Heart right ventricle (tissue), 16 donors: ENCODE measurements at regions of chrX and their contacts with region 1.

Region 1: GRCh38 chrX:109774706-109775105 is 41.6 kb upstream of the ACSL4 start:
- DNase-seq: no peak
- ATAC-seq: peak in 2 of 8 donors; percentile 29 to 94
- H3K4me3 ChIP-seq: no peak overlapping the region
- H3K27ac ChIP-seq: peak overlapping the region in 1 of 10 donors; percentile 1
- H3K4me1 ChIP-seq: no peaks in the 10 kb centered on the region
- H3K27me3 ChIP-seq: no peaks in the 10 kb centered on the region
- CTCF ChIP-seq: no peak

Region 2: DNA sequence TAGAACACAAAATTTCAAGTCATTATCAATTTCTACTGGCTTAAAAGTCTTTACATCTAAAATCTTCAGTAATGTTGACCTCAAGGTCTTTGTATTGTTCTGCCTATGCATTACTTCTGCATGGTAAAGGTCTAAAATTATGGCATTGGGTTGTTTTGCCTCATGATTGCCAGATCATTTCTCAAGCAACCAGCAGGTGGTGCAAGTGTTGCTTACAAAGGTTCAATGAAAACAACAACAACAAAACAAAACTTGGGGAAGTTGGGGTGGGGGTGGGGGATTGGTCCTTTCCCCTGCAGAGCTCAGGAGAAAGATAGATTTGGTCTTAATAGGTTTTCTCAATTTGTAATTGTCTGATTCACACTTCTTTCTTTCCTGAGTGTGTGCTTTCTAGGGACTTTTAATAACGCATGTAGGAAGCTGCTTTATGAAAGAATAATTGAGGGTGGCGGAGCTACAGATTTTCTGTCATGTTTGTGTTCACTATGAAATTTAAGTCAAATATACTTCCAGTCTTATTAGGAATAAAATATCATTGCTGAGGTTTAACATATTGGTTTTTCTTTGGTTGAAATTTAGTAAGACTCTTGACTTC is 1190.0 kb before region 1 on chrX:
- intact Hi-C with region 1: loop called in 1 of 10 experiments (anchors 5 kb)
- DNase-seq: no peak
- ATAC-seq: no peak
- H3K4me3 ChIP-seq: no peak overlapping the region
- H3K27ac ChIP-seq: no peak overlapping the region
- H3K4me1 ChIP-seq: no peaks in the 10 kb centered on the region
- H3K27me3 ChIP-seq: peaks cover 0 to 39% (median 0%) of the 10 kb centered on the region in 7 donors
- CTCF ChIP-seq: peak in 1 of 9 donors; percentile 25

Region 3: DNA sequence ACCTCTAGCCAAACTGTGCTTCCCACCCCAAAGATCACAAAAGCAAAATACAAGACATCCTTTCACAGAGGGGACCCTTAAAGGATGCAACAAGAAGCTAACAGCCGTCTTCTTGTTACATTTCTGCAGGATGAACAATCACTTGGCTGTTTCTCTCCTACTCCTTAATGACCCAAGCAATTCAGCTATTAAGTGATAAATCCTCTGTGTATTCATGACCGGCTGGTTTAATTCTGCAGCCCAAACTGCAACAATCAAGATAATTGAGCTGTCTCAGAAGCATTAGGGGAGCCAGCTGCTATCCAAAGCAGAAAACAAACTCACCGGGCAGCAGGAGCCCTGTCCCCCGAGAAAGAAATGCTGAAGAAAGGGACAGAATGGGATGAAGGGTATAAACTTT is 44.3 kb after region 1 on chrX:
- intact Hi-C with region 1: no loop called
- DNase-seq: no peak
- ATAC-seq: peak in 1 of 8 donors; percentile 49
- H3K4me3 ChIP-seq: no peak overlapping the region
- H3K27ac ChIP-seq: no peak overlapping the region
- H3K4me1 ChIP-seq: no peaks in the 10 kb centered on the region
- H3K27me3 ChIP-seq: peaks cover 0 to 54% (median 0%) of the 10 kb centered on the region in 7 donors
- CTCF ChIP-seq: no peak

Region 4: DNA sequence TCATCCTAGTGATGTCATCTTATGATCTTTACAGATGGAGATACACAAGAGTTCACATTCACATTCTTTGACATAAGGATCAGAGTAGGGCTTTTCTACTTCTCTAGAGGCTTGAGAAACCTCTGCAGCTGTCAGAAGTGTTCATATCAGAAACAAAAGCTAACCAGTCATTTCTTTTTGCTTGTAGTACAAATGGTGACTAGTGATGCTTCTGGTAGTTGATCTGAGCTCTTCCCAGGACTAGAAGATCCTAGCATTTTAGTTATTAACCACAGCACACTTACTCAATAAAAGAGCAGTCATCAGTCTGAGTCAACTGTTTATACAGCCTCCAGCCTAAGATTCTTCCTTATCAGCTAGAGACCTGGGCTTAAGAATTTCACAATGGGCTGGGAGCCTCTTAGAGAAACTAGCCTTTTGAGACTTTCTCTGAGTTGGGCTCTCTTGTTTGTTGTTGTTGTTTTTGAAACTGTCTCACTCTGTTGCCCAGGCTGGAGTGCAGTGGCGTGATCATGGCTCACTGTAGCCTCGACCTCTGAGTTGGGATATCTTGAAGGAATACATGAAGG is 312.3 kb after region 1 on chrX:
- intact Hi-C with region 1: no loop called
- DNase-seq: no peak
- ATAC-seq: peak in 2 of 8 donors; percentile 33 to 56
- H3K4me3 ChIP-seq: no peak overlapping the region
- H3K27ac ChIP-seq: peak overlapping the region in 1 of 10 donors; percentile 67
- H3K4me1 ChIP-seq: peaks cover 0 to 48% (median 15%) of the 10 kb centered on the region in 9 donors
- H3K27me3 ChIP-seq: peaks cover 0 to 24% (median 0%) of the 10 kb centered on the region in 7 donors
- CTCF ChIP-seq: no peak